GM12878 (cell line): ENCODE measurements at regions of chr3 and their contacts with region 1.

Region 1: DNA sequence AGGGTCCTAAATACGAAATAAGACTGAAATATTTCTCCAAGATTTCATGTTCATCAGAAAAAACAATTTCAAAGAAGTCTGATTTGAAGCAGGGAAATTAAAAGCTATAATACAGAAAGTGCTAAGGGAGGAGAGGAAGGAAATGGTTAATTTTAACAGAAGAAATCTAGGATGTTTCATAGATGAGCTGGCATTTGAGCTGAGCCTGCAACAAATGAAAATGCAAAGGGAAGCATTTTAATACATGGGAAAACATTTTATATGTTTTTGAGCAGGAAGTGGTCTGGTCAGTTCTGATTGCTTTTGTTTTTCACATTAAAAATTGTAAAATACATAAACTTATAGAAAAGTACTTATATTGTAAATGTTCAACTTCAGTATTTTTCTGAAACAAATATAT is 17.2 kb upstream of the RAP2B start:
- DNase-seq: no peak
- ATAC-seq: no peak
- H3K4me3 ChIP-seq: no peak overlapping the region
- H3K27ac ChIP-seq: no peak overlapping the region
- H3K4me1 ChIP-seq: peaks cover 5% of the 10 kb centered on the region; the same call in 1 of the 2 replicates
- H3K27me3 ChIP-seq: no peaks in the 10 kb centered on the region
- CTCF ChIP-seq: no peak
- EP300 ChIP-seq: no peak
- POLR2A ChIP-seq: no peak
- RAD21 ChIP-seq: no peak

Region 2: GRCh38 chr3:152695840-152696239 is 448.9 kb before region 1 on chr3:
- CTCF ChIA-PET with region 1: no interaction called
- POLR2A ChIA-PET with region 1: no interaction called
- RAD21 ChIA-PET with region 1: no interaction called
- SMC1A ChIA-PET with region 1: no interaction called
- in situ Hi-C with region 1: no loop called
- intact Hi-C with region 1: no loop called
- DNase-seq: no peak
- ATAC-seq: no peak
- H3K4me3 ChIP-seq: no peak overlapping the region
- H3K27ac ChIP-seq: no peak overlapping the region
- H3K4me1 ChIP-seq: no peaks in the 10 kb centered on the region
- H3K27me3 ChIP-seq: no peaks in the 10 kb centered on the region
- CTCF ChIP-seq: peak in 1 of 3 experiments; percentile 12; a peak in 1 of 6 replicates
- EP300 ChIP-seq: no peak
- POLR2A ChIP-seq: no peak
- RAD21 ChIP-seq: peak; percentile 52

Region 3: DNA sequence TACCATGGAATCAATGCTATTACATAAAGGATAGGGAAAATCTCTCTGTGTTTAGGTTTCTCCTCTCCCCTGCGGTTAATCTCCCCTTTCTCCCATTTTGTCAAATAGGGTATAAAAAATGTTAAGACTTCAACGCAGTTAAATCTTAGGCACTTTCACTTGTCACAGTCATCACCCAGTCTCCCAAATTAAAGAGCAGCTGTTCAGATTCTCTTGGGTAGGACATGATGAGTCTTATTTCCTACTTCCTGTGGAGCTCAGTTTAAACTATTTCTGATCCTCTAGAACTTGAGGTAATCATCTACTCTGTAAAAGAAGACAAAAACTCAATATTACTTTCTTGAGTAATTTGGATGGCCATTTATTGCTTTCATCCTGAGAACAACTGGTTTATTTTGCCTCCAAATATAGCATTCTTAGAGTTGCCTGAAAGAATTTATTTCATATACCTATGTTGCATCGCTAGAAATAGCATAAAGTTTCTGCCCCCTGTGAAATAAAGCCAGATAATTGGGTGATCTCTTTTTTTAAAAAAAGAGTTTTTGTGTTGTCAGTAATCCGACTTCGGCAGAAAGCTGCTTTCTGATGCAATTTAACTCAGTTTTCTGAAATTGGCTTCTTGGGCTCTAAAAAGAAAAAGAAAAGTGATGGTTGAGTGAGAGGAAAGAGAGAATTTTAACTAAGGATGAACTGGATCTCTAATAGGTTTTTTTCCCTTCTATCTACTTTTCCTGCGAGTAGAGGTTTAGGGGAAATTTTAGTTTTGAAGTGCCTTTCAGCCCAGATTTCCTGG is 37.9 kb after region 1 on chr3:
- CTCF ChIA-PET with region 1: no interaction called
- POLR2A ChIA-PET with region 1: no interaction called
- RAD21 ChIA-PET with region 1: no interaction called
- SMC1A ChIA-PET with region 1: no interaction called
- in situ Hi-C with region 1: no loop called
- intact Hi-C with region 1: no loop called
- DNase-seq: no peak
- ATAC-seq: no peak
- H3K4me3 ChIP-seq: no peak overlapping the region
- H3K27ac ChIP-seq: no peak overlapping the region
- H3K4me1 ChIP-seq: no peaks in the 10 kb centered on the region
- H3K27me3 ChIP-seq: no peaks in the 10 kb centered on the region
- CTCF ChIP-seq: no peak
- EP300 ChIP-seq: no peak
- POLR2A ChIP-seq: no peak
- RAD21 ChIP-seq: no peak

Region 4: GRCh38 chr3:153897842-153898241 is 753.1 kb after region 1 on chr3:
- CTCF ChIA-PET with region 1: no interaction called
- POLR2A ChIA-PET with region 1: no interaction called
- RAD21 ChIA-PET with region 1: no interaction called
- SMC1A ChIA-PET with region 1: no interaction called
- in situ Hi-C with region 1: no loop called
- intact Hi-C with region 1: loop called (anchors 5 kb)
- DNase-seq: no peak
- ATAC-seq: peak; percentile 82
- H3K4me3 ChIP-seq: no peak overlapping the region
- H3K27ac ChIP-seq: no peak overlapping the region
- H3K4me1 ChIP-seq: no peaks in the 10 kb centered on the region
- H3K27me3 ChIP-seq: no peaks in the 10 kb centered on the region
- CTCF ChIP-seq: no peak
- EP300 ChIP-seq: no peak
- POLR2A ChIP-seq: no peak
- RAD21 ChIP-seq: no peak